BJ (cell line): ENCODE measurements at regions of chr1 and their contacts with region 1.

Region 1: DNA sequence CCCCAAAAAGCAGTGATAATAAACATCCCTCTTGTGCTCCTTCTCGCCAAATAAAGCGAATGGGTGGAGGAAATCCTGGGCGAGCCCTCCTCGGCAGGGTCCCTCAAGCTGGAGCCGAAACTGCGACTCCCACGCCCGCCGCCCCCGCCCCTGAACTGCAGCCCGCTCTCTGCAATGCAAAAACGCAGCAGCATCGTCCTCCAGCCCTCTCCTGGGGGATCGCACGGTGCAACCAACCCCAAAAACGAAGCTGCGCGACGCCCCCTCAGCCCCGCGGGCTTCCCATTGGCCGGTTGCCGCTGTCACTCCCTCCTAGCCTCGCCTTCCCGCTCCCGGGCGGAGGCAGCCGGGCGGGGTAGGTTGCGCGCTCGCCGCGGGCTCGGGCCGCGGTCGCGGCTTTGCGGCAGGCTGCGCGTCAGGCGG is at the start of gene TMCC2:
- DNase-seq: no peak
- H3K4me3 ChIP-seq: peak within 1 kb of the TSS; percentile 71
- H3K27me3 ChIP-seq: peaks cover 2% of the 10 kb centered on the region
- CTCF ChIP-seq: 0 out of 2 replicates have a peak, but pooled peaks have one; percentile 8
- polyA plus RNA-seq, gene TMCC2: 2.4 and 3.4 TPM in 2 replicates

Region 2: DNA sequence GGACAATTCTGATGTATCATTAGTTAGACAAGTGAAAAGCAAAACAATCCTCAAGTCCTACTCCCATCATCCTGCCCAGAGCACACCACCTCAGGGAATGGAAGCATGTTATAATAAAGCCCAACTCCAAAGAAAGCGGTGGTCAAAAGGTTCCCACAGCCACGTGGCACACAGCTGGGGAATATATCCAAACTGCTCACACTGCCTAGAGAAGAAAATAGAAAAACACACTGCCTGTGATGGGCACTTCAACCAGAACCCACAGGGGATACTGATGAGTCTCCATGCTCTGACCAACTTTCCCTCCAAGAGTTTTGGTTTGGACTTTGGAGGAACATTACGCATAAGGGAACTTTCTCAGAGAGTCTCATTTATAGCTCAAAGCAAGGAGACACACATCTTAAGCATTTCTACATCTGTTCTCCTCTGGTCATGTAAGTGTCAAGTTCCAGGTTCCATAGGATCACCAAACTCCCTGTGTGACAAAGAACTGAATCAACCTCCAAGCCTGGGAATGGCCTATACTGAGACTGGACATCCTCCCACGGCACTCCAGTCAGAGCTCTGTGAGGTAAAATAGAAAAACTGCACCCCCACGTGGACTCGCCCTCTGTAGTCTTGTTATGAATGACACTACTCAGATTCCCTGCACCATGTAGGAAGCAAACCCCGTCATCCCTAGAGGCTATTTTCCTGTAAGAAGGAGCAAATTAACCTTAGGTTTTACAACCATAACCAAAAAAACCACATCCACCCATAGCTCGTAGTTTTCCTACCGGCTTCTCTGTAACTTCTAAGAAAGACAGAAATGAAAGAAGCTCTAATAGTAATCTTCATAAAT is 28.3 kb before region 1 on chr1:
- CTCF ChIA-PET with region 1: interaction called, 18 read pairs
- POLR2A ChIA-PET with region 1: no interaction called
- DNase-seq: peak; percentile 34
- H3K4me3 ChIP-seq: no peak overlapping the region
- H3K27me3 ChIP-seq: no peaks in the 10 kb centered on the region
- CTCF ChIP-seq: no peak

Region 3: GRCh38 chr1:205237526-205238484 is 10.2 kb after region 1 on chr1:
- CTCF ChIA-PET with region 1: interaction called, 24 read pairs
- POLR2A ChIA-PET with region 1: no interaction called
- DNase-seq: no peak
- H3K4me3 ChIP-seq: no peak overlapping the region
- H3K27me3 ChIP-seq: no peaks in the 10 kb centered on the region; the same call in 1 of the 2 replicates
- CTCF ChIP-seq: no peak

Region 4: DNA sequence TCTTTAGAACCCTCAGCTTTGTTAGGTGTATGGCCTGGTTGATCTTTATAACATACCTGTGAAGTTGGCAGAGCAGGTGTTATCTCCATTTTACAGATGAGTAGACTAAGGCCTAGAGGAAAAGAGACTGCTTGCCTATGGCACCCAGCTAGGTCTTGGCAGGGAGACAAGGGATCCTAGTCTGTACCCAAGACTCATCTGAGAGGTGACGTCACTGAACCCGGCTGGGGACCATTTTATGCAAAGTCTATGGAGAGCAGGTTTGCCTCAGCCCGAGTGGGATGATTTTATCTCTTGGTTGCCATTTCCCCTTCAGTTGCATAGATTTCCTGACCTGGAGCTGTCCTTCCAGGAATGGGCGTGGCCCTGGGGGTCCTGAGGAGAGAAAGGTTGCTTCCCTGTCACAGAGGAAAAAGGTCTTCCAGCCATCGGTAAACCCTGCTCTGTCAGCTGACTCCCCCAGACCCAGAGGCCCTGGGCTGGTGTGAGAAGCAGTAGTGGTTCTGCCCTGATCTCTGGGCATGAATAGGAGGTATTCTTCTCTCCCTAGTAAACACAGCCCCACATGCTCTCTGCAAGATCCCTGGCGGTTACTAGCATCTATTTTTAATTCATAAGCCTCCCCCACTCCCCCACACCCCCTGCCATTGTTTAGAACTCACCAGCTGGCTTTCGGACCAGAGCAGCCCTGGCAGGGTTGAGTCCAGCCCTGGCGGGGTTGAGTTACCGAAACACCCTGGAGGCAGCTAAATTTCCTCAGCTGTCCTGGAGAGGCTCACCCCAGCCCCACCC is 19.7 kb after region 1 on chr1:
- CTCF ChIA-PET with region 1: interaction called, 10 read pairs
- POLR2A ChIA-PET with region 1: no interaction called
- DNase-seq: no peak
- H3K4me3 ChIP-seq: no peak overlapping the region
- H3K27me3 ChIP-seq: no peaks in the 10 kb centered on the region
- CTCF ChIP-seq: no peak